T-cell (primary cell): ENCODE measurements at regions of chr14 and their contacts with region 1.

Region 1: GRCh38 chr14:61569783-61570182 is 125.5 kb upstream of the HIF1A start:
- DNase-seq: peak in 34 of 35 experiments; percentile 10 to 80 (median 41)
- ATAC-seq: peak; percentile 68 to 78 (median 75)
- H3K4me3 ChIP-seq: no peak overlapping the region
- H3K4me3 Mint-ChIP-seq: peak overlapping the region; percentile 37 to 79 (median 60)
- H3K27ac ChIP-seq: no peak overlapping the region
- H3K27ac Mint-ChIP-seq: peak overlapping the region; percentile 80 to 84
- H3K4me1 ChIP-seq: peaks cover 43 to 47% of the 10 kb centered on the region in 2 experiments
- H3K4me1 Mint-ChIP-seq: peaks cover 55 to 68% (median 65%) of the 10 kb centered on the region in 3 donors
- H3K27me3 ChIP-seq: no peaks in the 10 kb centered on the region
- H3K27me3 Mint-ChIP-seq: peaks cover 0 to 3% of the 10 kb centered on the region in 2 donors

Region 2: GRCh38 chr14:61552241-61552640 is 17.5 kb before region 1 on chr14:
- CTCF ChIA-PET with region 1: no interaction called
- POLR2A ChIA-PET with region 1: no interaction called
- DNase-seq: no peak
- ATAC-seq: no peak
- H3K4me3 ChIP-seq: no peak overlapping the region
- H3K4me3 Mint-ChIP-seq: no peak overlapping the region
- H3K27ac ChIP-seq: peak overlapping the region; percentile 18
- H3K27ac Mint-ChIP-seq: peak overlapping the region; percentile 89 to 91
- H3K4me1 ChIP-seq: peaks cover 0 to 12% of the 10 kb centered on the region in 2 experiments
- H3K4me1 Mint-ChIP-seq: peaks cover 55 to 60% (median 58%) of the 10 kb centered on the region in 3 donors
- H3K27me3 ChIP-seq: no peaks in the 10 kb centered on the region
- H3K27me3 Mint-ChIP-seq: no peaks in the 10 kb centered on the region

Region 3: GRCh38 chr14:61609191-61609843 is 39.5 kb after region 1 on chr14:
- CTCF ChIA-PET with region 1: no interaction called
- POLR2A ChIA-PET with region 1: no interaction called
- DNase-seq: no peak
- ATAC-seq: no peak
- H3K4me3 ChIP-seq: no peak overlapping the region
- H3K4me3 Mint-ChIP-seq: no peak overlapping the region
- H3K27ac ChIP-seq: no peak overlapping the region
- H3K27ac Mint-ChIP-seq: no peak overlapping the region
- H3K4me1 ChIP-seq: no peaks in the 10 kb centered on the region
- H3K4me1 Mint-ChIP-seq: no peaks in the 10 kb centered on the region
- H3K27me3 ChIP-seq: no peaks in the 10 kb centered on the region
- H3K27me3 Mint-ChIP-seq: peaks cover 0 to 1% of the 10 kb centered on the region in 2 donors

Region 4: GRCh38 chr14:61780125-61780524 is 210.3 kb after region 1 on chr14:
- CTCF ChIA-PET with region 1: no interaction called
- POLR2A ChIA-PET with region 1: interaction called, 3 to 13 read pairs
- DNase-seq: peak in 9 of 35 experiments; percentile 2 to 40 (median 5)
- ATAC-seq: peak; percentile 87 to 97 (median 94)
- H3K4me3 ChIP-seq: no peak overlapping the region
- H3K4me3 Mint-ChIP-seq: peak overlapping the region in 2 of 3 donors; percentile 28 to 75
- H3K27ac ChIP-seq: peak overlapping the region; percentile 55
- H3K27ac Mint-ChIP-seq: peak overlapping the region; percentile 95 to 97
- H3K4me1 ChIP-seq: peaks cover 10 to 34% of the 10 kb centered on the region in 2 experiments
- H3K4me1 Mint-ChIP-seq: peaks cover 28 to 46% (median 36%) of the 10 kb centered on the region in 3 donors
- H3K27me3 ChIP-seq: no peaks in the 10 kb centered on the region
- H3K27me3 Mint-ChIP-seq: no peaks in the 10 kb centered on the region